ENCODE measurements at regions of chr1 and their contacts with region 1.

Region 1: GRCh38 chr1:50704126-50704525 is 255.9 kb downstream of the FAF1 start:
- DNase-seq: no peak
- ATAC-seq: peak; percentile 79
- H3K4me3 ChIP-seq: no peak overlapping the region
- H3K27ac ChIP-seq: no peak overlapping the region
- H3K4me1 ChIP-seq: no peaks in the 10 kb centered on the region
- H3K27me3 ChIP-seq: no peaks in the 10 kb centered on the region
- CTCF ChIP-seq: peak; percentile 59 to 70 (median 61)
- EP300 ChIP-seq: no peak
- POLR2A ChIP-seq: no peak
- RAD21 ChIP-seq: peak; percentile 70

Region 2: DNA sequence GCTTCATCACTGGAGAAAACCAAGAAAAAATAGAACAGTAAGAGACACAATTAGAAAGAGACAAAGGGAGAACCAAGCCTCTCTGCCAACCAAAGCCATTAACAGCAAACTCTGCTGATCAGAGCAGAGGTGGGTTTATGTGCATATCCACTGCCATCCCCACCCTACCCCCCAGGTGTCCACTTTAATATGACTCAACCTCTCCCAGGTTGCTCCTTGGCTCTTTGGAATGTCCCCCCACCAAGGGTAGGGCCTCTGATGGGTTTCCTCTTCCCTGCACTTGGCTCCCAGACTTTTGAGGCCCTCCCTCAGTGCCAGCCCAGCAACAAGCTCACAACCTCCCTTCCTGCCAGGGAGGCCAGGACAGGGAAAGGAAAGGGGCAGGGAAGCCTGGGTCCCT is 385.7 kb before region 1 on chr1:
- CTCF ChIA-PET with region 1: no interaction called
- POLR2A ChIA-PET with region 1: no interaction called
- RAD21 ChIA-PET with region 1: no interaction called
- SMC1A ChIA-PET with region 1: no interaction called
- in situ Hi-C with region 1: no loop called
- intact Hi-C with region 1: no loop called
- DNase-seq: no peak
- ATAC-seq: no peak
- H3K4me3 ChIP-seq: no peak overlapping the region
- H3K27ac ChIP-seq: no peak overlapping the region
- H3K4me1 ChIP-seq: no peaks in the 10 kb centered on the region
- H3K27me3 ChIP-seq: no peaks in the 10 kb centered on the region
- CTCF ChIP-seq: no peak
- EP300 ChIP-seq: no peak
- POLR2A ChIP-seq: no peak
- RAD21 ChIP-seq: no peak

Region 3: DNA sequence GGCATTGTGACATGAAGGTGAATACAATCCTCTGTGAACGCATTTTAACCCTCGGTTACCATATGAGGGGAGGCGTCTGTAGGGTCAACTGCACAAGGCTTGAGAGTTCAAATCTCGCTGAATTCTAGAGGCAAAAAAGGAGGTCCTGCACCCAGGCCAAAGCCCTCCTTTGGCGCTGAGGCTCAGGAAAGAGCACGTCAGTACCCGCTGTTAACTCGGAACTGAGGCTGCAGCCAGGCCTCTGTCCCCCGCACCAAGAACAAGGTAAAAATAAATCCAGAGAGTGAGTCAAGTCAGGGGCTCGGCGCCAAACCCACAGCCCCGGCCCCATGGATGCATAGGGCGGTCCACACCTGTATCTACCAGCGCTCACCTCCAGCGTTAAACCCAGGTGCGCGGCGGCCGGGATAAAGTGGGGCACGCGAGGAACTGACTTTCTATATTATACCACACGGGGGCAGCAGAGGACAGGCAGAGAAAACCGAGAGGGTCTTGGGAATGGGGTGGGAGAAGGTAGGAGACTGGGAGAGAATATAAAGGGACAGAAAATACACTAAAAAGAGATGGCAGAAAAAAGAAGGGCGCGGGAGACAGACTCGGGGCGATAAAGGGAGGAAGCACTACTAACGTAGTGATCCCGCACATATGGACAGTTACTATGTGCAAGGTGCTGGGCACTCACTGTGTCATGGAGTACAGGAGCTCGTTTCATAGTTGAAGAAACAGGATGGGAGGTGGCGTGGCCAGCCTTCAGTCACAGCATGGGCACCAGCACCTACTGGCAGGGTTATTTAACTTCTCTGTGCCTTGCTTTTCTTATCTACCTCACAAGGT is 335.7 kb before region 1 on chr1:
- CTCF ChIA-PET with region 1: interaction called, 77 read pairs
- POLR2A ChIA-PET with region 1: no interaction called
- RAD21 ChIA-PET with region 1: interaction called, 7 read pairs
- SMC1A ChIA-PET with region 1: interaction called, 13 read pairs
- in situ Hi-C with region 1: loop called (anchors 5 kb)
- intact Hi-C with region 1: loop called (anchors 1 kb)
- DNase-seq: no peak
- ATAC-seq: peak; percentile 86
- H3K4me3 ChIP-seq: no peak overlapping the region
- H3K27ac ChIP-seq: no peak overlapping the region
- H3K4me1 ChIP-seq: no peaks in the 10 kb centered on the region
- H3K27me3 ChIP-seq: no peaks in the 10 kb centered on the region
- CTCF ChIP-seq: peak; percentile 59 to 75 (median 70)
- EP300 ChIP-seq: no peak
- POLR2A ChIP-seq: no peak
- RAD21 ChIP-seq: peak; percentile 91

Region 4: DNA sequence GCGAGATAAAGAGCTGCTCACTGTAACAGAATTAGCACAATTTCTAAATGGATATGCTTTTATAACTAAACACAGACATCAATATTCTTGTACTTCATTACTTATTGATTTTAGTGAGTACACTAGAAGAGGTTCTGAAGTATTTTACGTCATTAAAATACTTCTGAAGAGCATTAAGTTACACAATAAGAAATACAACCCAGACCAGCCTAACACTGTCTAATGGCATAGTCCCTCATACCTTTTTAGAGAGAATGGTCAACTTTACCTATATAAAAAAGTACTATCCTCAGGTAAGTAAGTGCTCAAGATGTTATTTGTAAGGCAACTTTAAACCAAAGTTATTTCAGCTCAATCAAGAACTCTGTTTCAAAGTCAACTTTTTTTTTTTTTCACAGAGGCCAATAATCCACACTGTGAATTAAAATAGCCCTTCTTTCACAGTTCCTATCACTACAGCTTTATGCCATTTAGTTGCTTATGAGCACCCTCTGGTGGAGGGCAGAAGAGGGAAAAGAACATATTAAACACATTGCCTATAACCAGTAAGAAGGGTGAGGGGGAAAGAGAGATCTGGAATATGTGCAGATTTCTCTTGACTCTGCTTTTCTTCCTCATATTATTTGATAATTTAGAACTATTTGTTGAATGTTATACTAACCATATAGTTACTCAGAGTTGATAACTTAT is 98.8 kb before region 1 on chr1:
- CTCF ChIA-PET with region 1: interaction called, 43 read pairs
- POLR2A ChIA-PET with region 1: no interaction called
- RAD21 ChIA-PET with region 1: interaction called, 63 read pairs
- SMC1A ChIA-PET with region 1: interaction called, 30 read pairs
- in situ Hi-C with region 1: no loop called
- intact Hi-C with region 1: no loop called
- DNase-seq: no peak
- ATAC-seq: peak; percentile 88
- H3K4me3 ChIP-seq: no peak overlapping the region
- H3K27ac ChIP-seq: no peak overlapping the region
- H3K4me1 ChIP-seq: no peaks in the 10 kb centered on the region
- H3K27me3 ChIP-seq: no peaks in the 10 kb centered on the region
- CTCF ChIP-seq: peak; percentile 45 to 58 (median 50); a peak in 5 of 6 replicates
- EP300 ChIP-seq: no peak
- POLR2A ChIP-seq: no peak
- RAD21 ChIP-seq: peak; percentile 71

Region 5: GRCh38 chr1:50610563-50610962 is 93.6 kb before region 1 on chr1:
- CTCF ChIA-PET with region 1: interaction called, 43 read pairs
- POLR2A ChIA-PET with region 1: interaction called, 3 read pairs
- RAD21 ChIA-PET with region 1: interaction called, 63 read pairs
- SMC1A ChIA-PET with region 1: interaction called, 30 read pairs
- in situ Hi-C with region 1: no loop called
- intact Hi-C with region 1: no loop called
- DNase-seq: peak; percentile 36
- ATAC-seq: peak; percentile 89
- H3K4me3 ChIP-seq: no peak overlapping the region
- H3K27ac ChIP-seq: peak overlapping the region; percentile 37; the same call in 1 of the 2 replicates
- H3K4me1 ChIP-seq: peaks cover 5% of the 10 kb centered on the region
- H3K27me3 ChIP-seq: no peaks in the 10 kb centered on the region
- CTCF ChIP-seq: no peak
- EP300 ChIP-seq: no peak; a peak in 1 of 4 replicates
- POLR2A ChIP-seq: no peak
- RAD21 ChIP-seq: no peak

Region 6: GRCh38 chr1:50620680-50621329 is 83.3 kb before region 1 on chr1:
- CTCF ChIA-PET with region 1: interaction called, 39 read pairs
- POLR2A ChIA-PET with region 1: no interaction called
- RAD21 ChIA-PET with region 1: interaction called, 3 read pairs
- SMC1A ChIA-PET with region 1: interaction called, 8 read pairs
- in situ Hi-C with region 1: no loop called
- intact Hi-C with region 1: no loop called
- DNase-seq: no peak
- ATAC-seq: peak; percentile 46; the same call in 2 of the 3 replicates
- H3K4me3 ChIP-seq: no peak overlapping the region
- H3K27ac ChIP-seq: no peak overlapping the region
- H3K4me1 ChIP-seq: no peaks in the 10 kb centered on the region
- H3K27me3 ChIP-seq: no peaks in the 10 kb centered on the region
- CTCF ChIP-seq: peak; percentile 16 to 22 (median 19); a peak in 2 of 6 replicates
- EP300 ChIP-seq: no peak
- POLR2A ChIP-seq: no peak
- RAD21 ChIP-seq: 0 out of 2 replicates have a peak, but pooled peaks have one; percentile 2

Region 7: GRCh38 chr1:50724626-50725286 is 20.6 kb after region 1 on chr1:
- CTCF ChIA-PET with region 1: interaction called, 53 read pairs
- POLR2A ChIA-PET with region 1: no interaction called
- RAD21 ChIA-PET with region 1: interaction called, 4 read pairs
- SMC1A ChIA-PET with region 1: interaction called, 13 read pairs
- in situ Hi-C with region 1: no loop called
- intact Hi-C with region 1: no loop called
- DNase-seq: peak; percentile 62
- ATAC-seq: peak; percentile 93
- H3K4me3 ChIP-seq: no peak overlapping the region
- H3K27ac ChIP-seq: peak overlapping the region; percentile 48
- H3K4me1 ChIP-seq: peaks cover 20% of the 10 kb centered on the region
- H3K27me3 ChIP-seq: no peaks in the 10 kb centered on the region
- CTCF ChIP-seq: no peak
- EP300 ChIP-seq: no peak
- POLR2A ChIP-seq: no peak
- RAD21 ChIP-seq: no peak

Region 8: GRCh38 chr1:50735443-50735842 is 31.3 kb after region 1 on chr1:
- CTCF ChIA-PET with region 1: interaction called, 14 read pairs
- POLR2A ChIA-PET with region 1: no interaction called
- RAD21 ChIA-PET with region 1: no interaction called
- SMC1A ChIA-PET with region 1: interaction called, 5 read pairs
- in situ Hi-C with region 1: no loop called
- intact Hi-C with region 1: no loop called
- DNase-seq: no peak
- ATAC-seq: no peak; the same call in 2 of the 3 replicates
- H3K4me3 ChIP-seq: no peak overlapping the region
- H3K27ac ChIP-seq: no peak overlapping the region
- H3K4me1 ChIP-seq: no peaks in the 10 kb centered on the region
- H3K27me3 ChIP-seq: no peaks in the 10 kb centered on the region
- CTCF ChIP-seq: peak in 2 of 3 experiments; percentile 28 to 38; a peak in 2 of 6 replicates
- EP300 ChIP-seq: no peak
- POLR2A ChIP-seq: no peak
- RAD21 ChIP-seq: 0 out of 2 replicates have a peak, but pooled peaks have one; percentile 32

Measured in GM12878 (cell line).